Activated CD8-positive, alpha-beta T cell treated with anti-CD3 and anti-CD28 coated beads, Interleukin-2, amount 10 ng/mL, durations not matched to agents 7 days and 5 days (primary cell): ENCODE measurements at regions of chr2 and their contacts with region 1.

Region 1: GRCh38 chr2:176653479-176654443 is 384.5 kb downstream of the MTX2 start:
- DNase-seq: peak; percentile 59
- ATAC-seq: peak; percentile 64
- H3K4me3 Mint-ChIP-seq: no peak overlapping the region
- H3K27ac Mint-ChIP-seq: no peak overlapping the region
- H3K4me1 Mint-ChIP-seq: peaks cover 24% of the 10 kb centered on the region
- H3K27me3 Mint-ChIP-seq: peaks cover 39% of the 10 kb centered on the region

Region 2: GRCh38 chr2:176126929-176127773 is 526.6 kb before region 1 on chr2:
- CTCF ChIA-PET with region 1: interaction called, 38 read pairs
- POLR2A ChIA-PET with region 1: no interaction called
- DNase-seq: peak; percentile 75
- ATAC-seq: no peak
- H3K4me3 Mint-ChIP-seq: no peak overlapping the region
- H3K27ac Mint-ChIP-seq: no peak overlapping the region
- H3K4me1 Mint-ChIP-seq: peaks cover 16% of the 10 kb centered on the region
- H3K27me3 Mint-ChIP-seq: peaks cover 73% of the 10 kb centered on the region

Region 3: GRCh38 chr2:176140513-176141317 is 513.0 kb before region 1 on chr2:
- CTCF ChIA-PET with region 1: interaction called, 31 read pairs
- POLR2A ChIA-PET with region 1: interaction called, 3 read pairs
- DNase-seq: peak; percentile 79
- ATAC-seq: peak; percentile 93
- H3K4me3 Mint-ChIP-seq: peak overlapping the region; percentile 6
- H3K27ac Mint-ChIP-seq: no peak overlapping the region
- H3K4me1 Mint-ChIP-seq: peaks cover 29% of the 10 kb centered on the region
- H3K27me3 Mint-ChIP-seq: peaks cover 69% of the 10 kb centered on the region

Region 4: GRCh38 chr2:176638167-176639015 is 15.4 kb before region 1 on chr2:
- CTCF ChIA-PET with region 1: interaction called, 26 read pairs
- POLR2A ChIA-PET with region 1: no interaction called
- DNase-seq: peak; percentile 70
- ATAC-seq: peak; percentile 94
- H3K4me3 Mint-ChIP-seq: peak overlapping the region; percentile 61
- H3K27ac Mint-ChIP-seq: no peak overlapping the region
- H3K4me1 Mint-ChIP-seq: peaks cover 7% of the 10 kb centered on the region
- H3K27me3 Mint-ChIP-seq: peaks cover 60% of the 10 kb centered on the region

Region 5: DNA sequence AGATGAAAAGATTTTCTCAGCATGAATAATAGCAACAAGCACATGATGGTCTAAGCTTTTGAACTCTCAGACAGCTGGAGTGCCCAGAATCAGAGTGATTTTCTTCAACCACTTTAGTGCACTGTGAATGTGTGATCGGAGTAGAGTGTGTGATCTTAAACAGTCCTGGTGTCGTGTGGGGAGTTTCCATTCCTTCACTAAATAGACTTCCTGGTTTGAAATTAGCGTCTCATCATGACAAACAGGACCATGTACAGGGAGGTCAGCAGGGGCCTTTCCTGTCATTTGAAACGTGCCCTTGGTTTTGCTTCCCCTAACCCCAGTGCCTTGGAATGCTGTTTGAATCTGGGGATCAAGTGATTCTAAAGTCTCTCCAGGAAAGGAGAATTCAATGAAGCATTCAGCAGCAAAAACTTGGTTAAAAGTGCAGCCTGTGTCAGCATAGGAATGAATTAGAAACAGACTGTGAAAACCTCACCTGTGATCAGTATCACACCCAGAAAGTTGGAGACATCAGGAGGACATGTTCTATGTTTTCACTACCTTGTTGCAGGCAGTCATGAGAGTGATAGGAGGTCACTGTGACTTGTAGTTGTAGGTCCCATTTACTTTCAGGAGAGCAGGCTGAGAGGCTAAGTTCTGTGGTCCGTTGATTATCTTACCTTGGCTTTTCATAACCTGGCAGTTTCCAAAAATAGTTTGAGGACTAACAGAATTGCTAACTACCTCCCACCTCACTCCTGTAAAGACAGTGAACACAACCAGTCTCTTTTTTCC is 15.8 kb after region 1 on chr2:
- CTCF ChIA-PET with region 1: interaction called, 11 read pairs
- POLR2A ChIA-PET with region 1: no interaction called
- DNase-seq: no peak
- ATAC-seq: no peak
- H3K4me3 Mint-ChIP-seq: no peak overlapping the region
- H3K27ac Mint-ChIP-seq: no peak overlapping the region
- H3K4me1 Mint-ChIP-seq: no peaks in the 10 kb centered on the region
- H3K27me3 Mint-ChIP-seq: peaks cover 24% of the 10 kb centered on the region

Region 6: GRCh38 chr2:176830362-176830761 is 176.6 kb after region 1 on chr2:
- CTCF ChIA-PET with region 1: interaction called, 13 read pairs
- POLR2A ChIA-PET with region 1: no interaction called
- DNase-seq: peak; percentile 58
- ATAC-seq: peak; percentile 44
- H3K4me3 Mint-ChIP-seq: no peak overlapping the region
- H3K27ac Mint-ChIP-seq: peak overlapping the region; percentile 7
- H3K4me1 Mint-ChIP-seq: peaks cover 45% of the 10 kb centered on the region
- H3K27me3 Mint-ChIP-seq: no peaks in the 10 kb centered on the region

Region 7: GRCh38 chr2:177072090-177072489 is 418.3 kb after region 1 on chr2:
- CTCF ChIA-PET with region 1: no interaction called
- POLR2A ChIA-PET with region 1: no interaction called
- DNase-seq: no peak
- ATAC-seq: no peak
- H3K4me3 Mint-ChIP-seq: no peak overlapping the region
- H3K27ac Mint-ChIP-seq: no peak overlapping the region
- H3K4me1 Mint-ChIP-seq: no peaks in the 10 kb centered on the region
- H3K27me3 Mint-ChIP-seq: peaks cover 13% of the 10 kb centered on the region

Region 8: GRCh38 chr2:177093371-177093770 is 439.6 kb after region 1 on chr2:
- CTCF ChIA-PET with region 1: no interaction called
- POLR2A ChIA-PET with region 1: no interaction called
- DNase-seq: no peak
- ATAC-seq: no peak
- H3K4me3 Mint-ChIP-seq: no peak overlapping the region
- H3K27ac Mint-ChIP-seq: no peak overlapping the region
- H3K4me1 Mint-ChIP-seq: no peaks in the 10 kb centered on the region
- H3K27me3 Mint-ChIP-seq: peaks cover 4% of the 10 kb centered on the region